ENCODE measurements at regions of chr3 and their contacts with region 1.

Region 1: GRCh38 chr3:15557511-15557946 is 36.0 kb upstream of the COLQ start:
- DNase-seq: peak; percentile 82
- H3K4me3 Mint-ChIP-seq: no peak overlapping the region
- H3K27ac Mint-ChIP-seq: no peak overlapping the region
- H3K4me1 Mint-ChIP-seq: peaks cover 5% of the 10 kb centered on the region
- H3K27me3 Mint-ChIP-seq: no peaks in the 10 kb centered on the region
- CTCF ChIP-seq: peak; percentile 66

Region 2: DNA sequence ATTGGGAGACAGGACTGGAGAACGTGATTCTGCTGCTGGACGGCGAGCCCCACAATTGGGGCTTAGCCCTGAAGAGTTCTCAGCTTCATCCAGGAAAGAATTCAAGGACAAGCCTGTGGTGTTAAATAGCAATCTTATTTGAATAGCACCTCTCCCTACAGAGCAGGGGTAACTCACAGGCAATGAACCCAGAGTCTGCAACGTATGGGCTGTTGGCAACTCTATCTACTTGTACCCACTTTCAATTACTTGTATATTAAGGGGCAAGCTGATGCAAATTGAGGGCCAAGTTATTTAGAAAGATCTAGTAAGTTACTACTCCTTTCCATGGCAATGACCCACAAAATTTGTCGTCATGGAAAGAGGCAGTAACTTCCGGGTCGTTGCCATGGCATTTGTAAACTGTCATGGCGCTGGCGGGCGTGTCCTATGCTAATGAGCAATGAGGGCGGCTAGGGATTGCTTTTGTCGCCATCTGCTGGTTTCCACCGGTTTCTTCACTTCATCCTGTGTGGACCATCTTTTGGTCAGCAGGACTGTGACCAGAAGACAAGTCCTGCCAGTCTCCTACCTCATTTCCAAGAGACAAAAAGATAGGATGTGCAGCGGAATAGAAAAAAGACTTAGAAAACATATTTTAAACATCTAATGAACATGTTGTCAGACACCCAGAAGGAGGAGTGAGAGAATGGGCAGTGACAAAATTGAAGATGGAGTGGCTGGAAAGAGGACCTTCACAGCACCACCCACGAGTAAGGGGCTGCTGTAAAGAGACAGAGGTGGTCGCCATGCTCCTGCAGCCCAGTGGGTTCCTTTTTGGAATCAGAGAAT is 179.4 kb before region 1 on chr3:
- CTCF ChIA-PET with region 1: no interaction called
- POLR2A ChIA-PET with region 1: no interaction called
- intact Hi-C with region 1: loop called (anchors 1 kb)
- DNase-seq: peak; percentile 96
- H3K4me3 Mint-ChIP-seq: no peak overlapping the region
- H3K27ac Mint-ChIP-seq: no peak overlapping the region
- H3K4me1 Mint-ChIP-seq: no peaks in the 10 kb centered on the region
- H3K27me3 Mint-ChIP-seq: no peaks in the 10 kb centered on the region
- CTCF ChIP-seq: peak; percentile 86

Region 3: GRCh38 chr3:15427182-15427880 is 130.2 kb before region 1 on chr3 and contains the starts of genes EAF1 and METTL6:
- CTCF ChIA-PET with region 1: interaction called, 8 read pairs
- POLR2A ChIA-PET with region 1: no interaction called
- intact Hi-C with region 1: loop called (anchors 5 kb)
- DNase-seq: peak; percentile 76
- H3K4me3 Mint-ChIP-seq: peak within 1 kb of the TSS; percentile 91
- H3K27ac Mint-ChIP-seq: peak within 1 kb of the TSS; percentile 98
- H3K4me1 Mint-ChIP-seq: peaks cover 25% of the 10 kb centered on the region
- H3K27me3 Mint-ChIP-seq: no peaks in the 10 kb centered on the region
- CTCF ChIP-seq: no peak
- total RNA-seq, gene EAF1: 28.3 and 29.8 TPM in 2 replicates
- total RNA-seq, gene METTL6: 26.7 and 28.1 TPM in 2 replicates

Region 4: GRCh38 chr3:15805756-15806266 is 248.3 kb after region 1 on chr3:
- CTCF ChIA-PET with region 1: no interaction called
- POLR2A ChIA-PET with region 1: no interaction called
- intact Hi-C with region 1: no loop called
- DNase-seq: peak; percentile 75
- H3K4me3 Mint-ChIP-seq: no peak overlapping the region
- H3K27ac Mint-ChIP-seq: peak overlapping the region; percentile 81
- H3K4me1 Mint-ChIP-seq: peaks cover 23% of the 10 kb centered on the region
- H3K27me3 Mint-ChIP-seq: no peaks in the 10 kb centered on the region
- CTCF ChIP-seq: no peak